ENCODE measurements at regions of chr4 and their contacts with region 1.

Region 1: GRCh38 chr4:52869196-52869595 is 7.1 kb downstream of the RASL11B start:
- DNase-seq: peak; percentile 86 to 87
- ATAC-seq: peak; percentile 72
- H3K4me3 ChIP-seq: no peak overlapping the region
- H3K27ac ChIP-seq: peak overlapping the region; percentile 18 to 46
- H3K4me1 ChIP-seq: peaks cover 0 to 12% of the 10 kb centered on the region in 2 donors
- H3K27me3 ChIP-seq: no peaks in the 10 kb centered on the region

Region 2: DNA sequence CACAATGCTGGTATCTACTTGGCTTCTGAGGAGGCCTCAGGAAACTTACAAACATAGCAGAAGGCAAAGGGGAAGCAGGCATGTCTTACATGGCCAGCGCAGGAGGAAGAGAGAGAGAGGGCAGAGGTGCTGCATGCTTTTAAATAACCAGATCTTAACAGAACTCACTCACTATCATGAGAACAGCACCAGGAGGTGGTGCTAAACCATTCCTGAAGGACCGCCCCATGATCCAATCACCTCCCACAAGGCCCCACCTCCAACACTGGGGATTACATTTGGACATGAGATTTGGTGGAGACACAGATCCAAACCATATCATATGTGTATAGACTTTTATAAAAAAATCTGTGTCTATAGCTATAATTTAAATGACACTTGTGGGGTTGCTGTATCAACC is 69.4 kb before region 1 on chr4:
- intact Hi-C with region 1: no loop called
- DNase-seq: no peak
- ATAC-seq: no peak
- H3K4me3 ChIP-seq: no peak overlapping the region
- H3K27ac ChIP-seq: no peak overlapping the region
- H3K4me1 ChIP-seq: no peaks in the 10 kb centered on the region
- H3K27me3 ChIP-seq: no peaks in the 10 kb centered on the region

Region 3: GRCh38 chr4:52911684-52912294 is 42.6 kb after region 1 on chr4:
- intact Hi-C with region 1: loop called in 1 of 2 experiments (anchors 5 kb)
- DNase-seq: peak; percentile 78 to 82
- ATAC-seq: no peak
- H3K4me3 ChIP-seq: no peak overlapping the region
- H3K27ac ChIP-seq: no peak overlapping the region
- H3K4me1 ChIP-seq: peaks cover 2 to 7% of the 10 kb centered on the region in 2 donors
- H3K27me3 ChIP-seq: no peaks in the 10 kb centered on the region

Region 4: GRCh38 chr4:53055274-53055673 is 186.1 kb after region 1 on chr4:
- intact Hi-C with region 1: no loop called
- DNase-seq: no peak
- ATAC-seq: peak; percentile 23
- H3K4me3 ChIP-seq: no peak overlapping the region
- H3K27ac ChIP-seq: peak overlapping the region; percentile 36 to 97
- H3K4me1 ChIP-seq: peaks cover 0 to 6% of the 10 kb centered on the region in 2 donors
- H3K27me3 ChIP-seq: no peaks in the 10 kb centered on the region

Measured in aorta (tissue), 5 donors.